CD14-positive monocyte (primary cell): ENCODE measurements at regions of chr2 and their contacts with region 1.

Region 1: DNA sequence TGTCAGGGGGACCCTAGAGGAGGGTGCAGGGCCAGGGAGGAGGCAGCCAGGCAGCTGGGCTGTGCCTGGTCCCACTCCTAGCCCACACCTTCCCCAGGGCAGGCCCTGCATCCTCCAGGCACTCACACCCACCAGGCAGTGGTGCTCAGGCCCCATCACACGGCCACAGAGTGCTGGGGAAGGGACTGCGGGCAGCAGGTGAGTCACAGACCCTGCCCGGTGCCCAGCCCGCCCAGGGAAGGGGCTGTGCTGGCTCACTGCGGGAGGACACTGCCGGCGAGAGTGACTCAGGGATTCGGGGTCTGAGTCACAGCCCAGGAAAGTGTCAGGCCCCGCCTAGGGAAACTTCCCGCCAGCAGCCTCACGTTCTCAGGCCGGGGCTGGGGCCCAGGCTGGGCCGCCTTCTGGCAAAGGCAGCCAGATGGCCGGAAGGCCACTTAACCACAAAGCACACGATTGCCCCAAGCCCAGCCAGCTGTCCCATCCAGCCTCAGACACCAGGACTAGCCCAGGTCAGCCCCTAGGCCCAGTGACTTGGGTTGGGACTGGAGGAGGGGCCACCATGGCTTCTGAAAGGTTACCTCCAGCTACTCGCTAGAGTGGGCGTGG is 42.2 kb downstream of the BIN1 start:
- DNase-seq: peak; percentile 99
- H3K4me3 ChIP-seq: peak overlapping the region in 1 of 3 experiments; percentile 25
- H3K4me3 Mint-ChIP-seq: peak overlapping the region; percentile 34 to 72
- H3K27ac ChIP-seq: peak overlapping the region; percentile 76 to 83
- H3K27ac Mint-ChIP-seq: peak overlapping the region; percentile 83 to 94 (median 91)
- H3K4me1 ChIP-seq: peaks cover 47 to 52% of the 10 kb centered on the region in 2 donors
- H3K4me1 Mint-ChIP-seq: peaks cover 52% of the 10 kb centered on the region
- H3K27me3 ChIP-seq: no peaks in the 10 kb centered on the region
- H3K27me3 Mint-ChIP-seq: peaks cover 2 to 8% (median 3%) of the 10 kb centered on the region in 3 donors
- CTCF ChIP-seq: peak; percentile 28

Region 2: DNA sequence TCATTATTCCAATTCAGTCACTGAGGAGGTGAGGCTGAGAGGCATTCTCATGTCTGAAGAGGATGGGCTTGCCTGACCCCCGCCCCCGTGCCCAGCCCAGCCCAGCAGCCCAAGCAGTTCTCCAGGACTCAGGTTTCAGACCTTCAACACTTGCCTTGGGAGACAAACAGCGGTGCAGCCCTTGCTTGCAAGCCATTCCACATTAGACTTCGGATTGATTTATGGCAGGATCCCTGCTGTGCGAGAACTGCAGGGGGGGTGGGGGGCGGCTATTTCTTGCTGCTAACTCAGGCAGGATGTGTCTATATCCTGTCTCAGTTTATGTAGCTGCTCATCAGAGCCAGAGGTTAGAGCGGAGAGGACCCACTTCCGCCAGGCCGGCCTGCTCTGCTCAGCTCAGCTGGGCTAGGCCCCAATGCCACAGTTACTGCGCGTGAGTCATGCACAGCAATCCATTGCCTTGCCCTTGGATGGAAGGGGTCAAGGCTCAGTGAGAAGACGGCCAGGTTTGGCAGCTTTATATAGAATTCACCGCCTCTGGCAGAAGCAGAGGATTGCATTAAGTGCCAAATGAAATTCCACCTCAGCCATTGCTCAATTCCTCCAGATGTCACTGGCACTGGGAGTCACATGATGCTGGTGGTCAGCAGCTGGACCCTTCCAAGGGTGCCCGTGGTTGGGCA is 407.0 kb before region 1 on chr2:
- intact Hi-C with region 1: loop called in 1 of 2 experiments (anchors 10 kb)
- DNase-seq: peak; percentile 89 to 95 (median 91)
- H3K4me3 ChIP-seq: peak overlapping the region; percentile 62 to 83 (median 75)
- H3K4me3 Mint-ChIP-seq: peak overlapping the region; percentile 94 to 95
- H3K27ac ChIP-seq: peak overlapping the region; percentile 83 to 91
- H3K27ac Mint-ChIP-seq: peak overlapping the region; percentile 90 to 99 (median 94)
- H3K4me1 ChIP-seq: peaks cover 74 to 79% of the 10 kb centered on the region in 2 donors
- H3K4me1 Mint-ChIP-seq: peaks cover 76% of the 10 kb centered on the region
- H3K27me3 ChIP-seq: no peaks in the 10 kb centered on the region
- H3K27me3 Mint-ChIP-seq: peaks cover 2 to 4% (median 3%) of the 10 kb centered on the region in 3 donors
- CTCF ChIP-seq: no peak

Region 3: DNA sequence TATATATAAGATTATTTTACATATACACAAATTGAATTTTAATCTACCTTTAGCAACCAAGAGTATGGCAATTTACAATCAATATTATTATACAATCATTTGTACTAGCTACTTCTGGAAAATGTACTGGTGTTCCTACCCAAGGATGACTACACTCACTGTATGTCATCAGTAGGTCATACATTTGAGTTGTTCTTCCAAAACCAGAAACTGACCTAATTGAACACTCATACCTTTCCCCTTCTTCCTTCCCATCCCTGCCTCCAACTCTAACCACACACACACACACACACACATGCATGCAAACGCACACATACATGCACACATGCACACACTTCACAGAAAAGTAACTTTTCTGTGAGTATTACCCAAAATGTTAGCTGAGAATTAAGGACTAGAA is 237.4 kb after region 1 on chr2:
- intact Hi-C with region 1: loop called in 1 of 2 experiments (anchors 5 kb)
- DNase-seq: no peak
- H3K4me3 ChIP-seq: no peak overlapping the region
- H3K4me3 Mint-ChIP-seq: no peak overlapping the region
- H3K27ac ChIP-seq: no peak overlapping the region
- H3K27ac Mint-ChIP-seq: no peak overlapping the region
- H3K4me1 ChIP-seq: peaks cover 5 to 9% of the 10 kb centered on the region in 2 donors
- H3K4me1 Mint-ChIP-seq: peaks cover 11% of the 10 kb centered on the region
- H3K27me3 ChIP-seq: no peaks in the 10 kb centered on the region
- H3K27me3 Mint-ChIP-seq: no peaks in the 10 kb centered on the region
- CTCF ChIP-seq: no peak